ENCODE measurements at regions of chr2 and their contacts with region 1.

Region 1: DNA sequence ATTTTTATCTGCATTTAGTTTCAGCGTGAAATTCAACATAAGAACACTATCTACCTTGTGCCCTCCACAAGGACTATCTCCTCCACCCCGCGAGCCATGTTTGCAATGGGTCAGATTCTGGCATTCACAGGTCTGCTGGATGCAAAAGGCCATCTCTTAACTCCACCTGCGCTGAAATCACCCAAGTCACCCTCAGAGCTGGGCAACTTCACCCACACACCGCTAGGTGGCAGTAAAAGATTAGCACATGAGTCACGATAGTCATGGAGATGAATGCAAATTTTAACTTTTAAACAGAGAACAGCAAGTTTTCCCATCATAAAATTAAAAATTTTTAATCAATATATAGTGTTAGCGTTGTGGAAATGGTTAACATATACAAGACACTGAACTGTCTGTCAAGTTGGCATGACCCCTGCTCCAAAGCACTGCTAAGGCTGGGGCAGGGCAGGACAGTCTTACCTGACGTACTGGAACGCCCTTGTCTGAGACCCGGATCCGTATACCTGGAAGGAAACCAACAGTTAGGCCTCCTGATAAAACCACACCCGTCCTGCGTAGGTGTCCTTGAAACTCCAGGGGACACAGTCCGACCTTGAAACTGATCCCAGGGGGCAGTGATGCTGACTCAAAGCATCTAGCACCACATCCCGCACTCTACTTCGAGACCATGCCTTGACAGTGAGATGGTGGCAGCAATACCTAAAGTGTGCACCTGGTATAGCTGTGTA is 89.6 kb downstream of the UXS1 start:
- DNase-seq: no peak
- ATAC-seq: peak; percentile 54 to 73 (median 56)
- H3K4me3 ChIP-seq: no peak overlapping the region
- H3K27ac ChIP-seq: no peak overlapping the region
- H3K4me1 ChIP-seq: peaks cover 20% of the 10 kb centered on the region
- H3K27me3 ChIP-seq: no peaks in the 10 kb centered on the region
- CTCF ChIP-seq: peak; percentile 97

Region 2: GRCh38 chr2:106147159-106147558 is 42.7 kb after region 1 on chr2:
- intact Hi-C with region 1: no loop called
- DNase-seq: no peak
- ATAC-seq: no peak
- H3K4me3 ChIP-seq: no peak overlapping the region
- H3K27ac ChIP-seq: no peak overlapping the region
- H3K4me1 ChIP-seq: peaks cover 8% of the 10 kb centered on the region
- H3K27me3 ChIP-seq: no peaks in the 10 kb centered on the region
- CTCF ChIP-seq: no peak

Region 3: DNA sequence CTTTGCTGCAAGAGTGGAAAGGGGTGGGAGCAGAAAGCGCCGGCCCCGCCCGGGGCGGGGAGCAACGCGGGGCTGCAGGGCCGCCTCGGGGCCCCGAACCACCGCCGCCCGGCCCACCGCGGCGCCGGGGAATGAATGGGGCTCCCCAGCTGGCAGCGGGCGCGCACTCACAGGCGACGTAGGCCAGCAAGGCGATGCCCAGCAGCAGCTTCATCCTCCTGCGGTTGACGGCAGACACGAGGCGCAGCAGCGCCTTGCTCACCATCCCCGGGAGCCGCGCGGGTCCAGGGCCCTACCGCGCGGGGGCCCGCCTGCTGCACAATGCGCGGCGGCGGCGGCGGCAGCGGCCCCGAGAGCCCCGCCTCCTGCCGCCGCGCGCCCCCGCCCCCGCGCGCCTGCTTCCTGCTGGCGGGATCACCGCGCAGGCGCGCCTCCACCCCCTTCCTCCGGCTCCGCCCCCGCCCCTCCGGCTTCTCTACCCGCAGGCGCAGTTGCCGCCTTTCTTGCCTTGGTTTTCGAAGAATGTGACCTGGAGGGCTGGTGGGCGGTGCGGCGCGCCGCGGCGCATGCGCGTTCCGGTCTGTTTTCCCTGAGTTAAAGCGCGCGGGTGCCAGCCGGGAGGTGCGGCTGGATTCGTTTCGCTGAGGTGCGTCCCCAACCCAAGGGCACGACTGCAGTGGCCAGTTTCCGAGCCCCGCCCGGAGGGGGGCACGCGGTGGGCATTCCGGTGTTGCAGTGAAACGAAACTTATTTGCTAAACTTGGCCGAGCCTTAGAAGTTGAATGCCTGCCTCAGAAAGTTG is 89.7 kb after region 1 on chr2 and contains the start of gene UXS1:
- intact Hi-C with region 1: loop called in 1 of 2 experiments (anchors 5 kb)
- DNase-seq: peak; percentile 98 to 99
- ATAC-seq: peak; percentile 92 to 96 (median 94)
- H3K4me3 ChIP-seq: peak within 1 kb of the TSS; percentile 96
- H3K27ac ChIP-seq: peak within 1 kb of the TSS; percentile 89
- H3K4me1 ChIP-seq: peaks cover 19% of the 10 kb centered on the region
- H3K27me3 ChIP-seq: no peaks in the 10 kb centered on the region
- CTCF ChIP-seq: no peak
- total RNA-seq, gene UXS1: 12.2 to 24.7 (median 21.1) TPM

Region 4: GRCh38 chr2:106307860-106308259 is 203.4 kb after region 1 on chr2:
- intact Hi-C with region 1: no loop called
- DNase-seq: no peak
- ATAC-seq: no peak
- H3K4me3 ChIP-seq: no peak overlapping the region
- H3K27ac ChIP-seq: no peak overlapping the region
- H3K4me1 ChIP-seq: no peaks in the 10 kb centered on the region
- H3K27me3 ChIP-seq: no peaks in the 10 kb centered on the region
- CTCF ChIP-seq: no peak

Region 5: DNA sequence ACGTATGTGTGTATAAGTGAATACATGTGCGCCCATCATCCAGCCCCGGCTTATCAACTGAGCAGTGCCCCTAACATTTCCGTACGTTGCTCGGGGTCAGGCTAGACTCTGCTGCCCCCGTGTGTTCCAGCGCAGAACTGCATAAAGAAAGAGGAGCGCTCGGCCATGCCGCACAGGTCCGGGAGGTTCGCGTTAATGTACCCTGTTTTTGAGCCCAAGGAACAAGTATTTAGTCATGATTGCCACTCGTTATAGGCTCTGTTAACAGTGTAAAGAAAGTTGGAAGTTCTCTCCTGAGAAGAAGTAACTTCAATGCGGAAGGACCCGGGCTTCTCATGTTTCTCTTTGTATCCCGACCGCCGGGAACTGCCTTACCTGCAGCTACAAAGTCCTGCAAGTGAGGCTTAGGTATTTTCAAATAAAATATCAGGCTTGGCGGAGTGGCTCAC is 438.3 kb after region 1 on chr2:
- intact Hi-C with region 1: loop called (anchors 1 to 5 kb)
- DNase-seq: peak; percentile 60 to 78
- ATAC-seq: peak; percentile 85 to 94 (median 94)
- H3K4me3 ChIP-seq: peak overlapping the region; percentile 53
- H3K27ac ChIP-seq: no peak overlapping the region
- H3K4me1 ChIP-seq: no peaks in the 10 kb centered on the region
- H3K27me3 ChIP-seq: peaks cover 0 to 4% (median 0%) of the 10 kb centered on the region in 3 donors
- CTCF ChIP-seq: peak; percentile 96

Region 6: GRCh38 chr2:106582148-106583143 is 477.9 kb after region 1 on chr2:
- intact Hi-C with region 1: loop called (anchors 2 to 5 kb)
- DNase-seq: peak; percentile 56 to 76
- ATAC-seq: peak; percentile 82 to 95 (median 86)
- H3K4me3 ChIP-seq: peak overlapping the region; percentile 27
- H3K27ac ChIP-seq: no peak overlapping the region
- H3K4me1 ChIP-seq: no peaks in the 10 kb centered on the region
- H3K27me3 ChIP-seq: peaks cover 0 to 18% (median 9%) of the 10 kb centered on the region in 3 donors
- CTCF ChIP-seq: peak; percentile 83

Measured in psoas muscle (tissue), 8 donors.